Dorsolateral prefrontal cortex (tissue), 120 donors: ENCODE measurements at regions of chr18 and their contacts with region 1.

Region 1: DNA sequence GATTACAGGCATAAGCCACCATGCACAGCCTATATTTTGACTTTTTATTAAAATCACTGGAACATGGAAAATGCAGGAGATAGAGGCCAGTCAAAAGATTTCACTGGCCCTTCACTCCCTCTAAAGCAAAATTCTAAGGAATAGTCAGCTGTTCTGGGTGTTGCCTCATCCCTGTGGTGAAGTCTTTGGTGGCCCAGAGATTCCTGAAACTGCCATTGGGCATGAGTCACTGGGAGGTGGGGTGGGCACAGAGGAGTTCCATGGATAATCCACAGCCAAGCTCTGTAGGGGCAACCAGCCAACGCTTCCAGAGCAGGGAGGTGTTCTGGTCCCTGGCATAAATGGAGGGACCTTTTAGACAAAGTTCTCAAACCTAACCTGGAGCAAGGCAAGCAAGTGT is 89.7 kb upstream of the TTC39C start:
- DNase-seq: no peak
- H3K4me3 ChIP-seq: no peak overlapping the region
- H3K27ac ChIP-seq: no peak overlapping the region
- H3K27me3 ChIP-seq: no peaks in the 10 kb centered on the region
- CTCF ChIP-seq: no peak

Region 2: DNA sequence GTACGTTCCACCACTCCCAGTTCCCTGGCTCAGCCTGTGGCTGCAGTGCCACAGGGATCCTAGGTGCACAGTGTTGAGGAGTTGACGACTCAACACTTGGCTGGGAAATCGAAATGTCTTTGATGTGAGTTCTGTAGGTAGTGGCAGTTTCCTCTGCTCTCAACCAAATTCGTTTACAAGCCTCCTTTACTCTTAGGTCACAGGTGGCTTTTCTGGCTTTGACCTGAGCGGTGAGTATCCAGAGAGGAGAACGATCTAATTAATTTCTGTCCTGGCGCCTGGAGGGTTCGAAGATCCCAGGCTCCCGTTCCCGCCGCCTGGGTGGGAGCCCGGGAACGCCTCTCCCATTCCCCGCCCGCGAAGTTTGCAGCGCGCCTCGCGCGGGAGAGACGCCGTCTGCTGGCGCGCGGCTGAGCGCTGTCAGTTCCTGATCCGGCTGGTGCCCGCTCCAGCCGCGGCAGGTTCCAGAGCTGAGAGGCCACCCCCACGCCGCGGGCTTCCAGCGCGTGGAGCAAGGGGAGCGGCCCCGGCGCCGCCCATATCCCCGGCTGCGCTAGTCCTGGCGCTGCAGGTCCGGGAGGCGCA is 235.7 kb before region 1 on chr18 and contains the start of gene LAMA3:
- intact Hi-C with region 1: no loop called
- DNase-seq: peak in 5 of 10 donors; percentile 4 to 62 (median 43)
- H3K4me3 ChIP-seq: peak within 1 kb of the TSS; percentile 31 to 72 (median 56)
- H3K27ac ChIP-seq: peak within 1 kb of the TSS in 2 of 59 donors; percentile 6 to 65
- H3K27me3 ChIP-seq: peaks cover 0 to 56% (median 27%) of the 10 kb centered on the region in 45 donors
- CTCF ChIP-seq: peak in 8 of 56 donors; percentile 12 to 30 (median 22)
- total RNA-seq, gene LAMA3: 3.2 to 17.7 (median 8.6) TPM

Region 3: GRCh38 chr18:23943104-23943503 is 18.3 kb after region 1 on chr18:
- intact Hi-C with region 1: no loop called
- DNase-seq: no peak
- H3K4me3 ChIP-seq: no peak overlapping the region
- H3K27ac ChIP-seq: peak overlapping the region in 7 of 59 donors; percentile 15 to 73 (median 51)
- H3K27me3 ChIP-seq: no peaks in the 10 kb centered on the region
- CTCF ChIP-seq: no peak

Region 4: GRCh38 chr18:24118750-24119577 is 194.2 kb after region 1 on chr18:
- intact Hi-C with region 1: loop called in 1 of 2 experiments (anchors 10 kb)
- DNase-seq: peak in 9 of 10 donors; percentile 36 to 83 (median 60)
- H3K4me3 ChIP-seq: no peak overlapping the region
- H3K27ac ChIP-seq: no peak overlapping the region
- H3K27me3 ChIP-seq: no peaks in the 10 kb centered on the region
- CTCF ChIP-seq: peak; percentile 86 to 99 (median 94)